Sigmoid colon (tissue), 7 donors: ENCODE measurements at regions of chr5 and their contacts with region 1.

Region 1: DNA sequence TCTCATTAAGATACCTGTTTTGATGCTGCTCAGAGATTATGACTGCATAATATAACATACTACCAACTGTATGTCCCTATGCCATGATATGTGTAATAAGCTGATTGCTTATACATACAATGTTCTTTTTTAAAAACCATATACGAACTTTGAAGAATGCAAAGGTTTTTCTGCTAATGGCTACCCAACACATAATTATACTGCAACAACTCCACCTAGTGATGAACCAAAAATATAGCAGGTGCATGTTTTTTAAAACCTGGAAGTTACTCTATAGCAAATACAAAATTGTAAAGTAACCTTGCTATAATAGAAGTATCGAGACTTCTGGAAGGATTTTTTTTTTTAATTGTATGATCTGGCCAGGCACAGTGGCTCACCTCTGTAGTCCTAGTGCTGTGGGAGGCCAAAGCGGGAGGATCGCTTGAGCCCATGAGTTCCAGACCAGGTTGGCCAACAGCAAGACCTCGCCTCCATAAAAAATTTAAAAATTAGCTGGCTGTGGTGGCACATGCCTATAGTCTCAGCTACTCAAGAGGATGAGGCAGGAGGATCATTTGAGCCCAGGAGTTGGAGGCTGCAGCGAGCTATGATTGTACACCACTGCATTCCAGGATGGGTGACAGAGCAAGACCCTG is 49.1 kb downstream of the HOMER1 start:
- DNase-seq: no peak
- H3K4me3 ChIP-seq: no peak overlapping the region
- H3K27ac ChIP-seq: no peak overlapping the region
- H3K4me1 ChIP-seq: no peaks in the 10 kb centered on the region
- H3K27me3 ChIP-seq: no peaks in the 10 kb centered on the region
- CTCF ChIP-seq: peak; percentile 42 to 54 (median 49)
- EP300 ChIP-seq: no peak
- POLR2A ChIP-seq: no peak

Region 2: GRCh38 chr5:79133657-79134451 is 331.0 kb before region 1 on chr5:
- intact Hi-C with region 1: loop called (anchors 1 kb)
- DNase-seq: peak; percentile 86
- H3K4me3 ChIP-seq: peak overlapping the region; percentile 9 to 42 (median 33)
- H3K27ac ChIP-seq: peak overlapping the region; percentile 68 to 85 (median 83)
- H3K4me1 ChIP-seq: peaks cover 0 to 21% (median 6%) of the 10 kb centered on the region in 4 donors
- H3K27me3 ChIP-seq: no peaks in the 10 kb centered on the region
- CTCF ChIP-seq: peak; percentile 69 to 85 (median 76)
- EP300 ChIP-seq: no peak
- POLR2A ChIP-seq: no peak

Region 3: DNA sequence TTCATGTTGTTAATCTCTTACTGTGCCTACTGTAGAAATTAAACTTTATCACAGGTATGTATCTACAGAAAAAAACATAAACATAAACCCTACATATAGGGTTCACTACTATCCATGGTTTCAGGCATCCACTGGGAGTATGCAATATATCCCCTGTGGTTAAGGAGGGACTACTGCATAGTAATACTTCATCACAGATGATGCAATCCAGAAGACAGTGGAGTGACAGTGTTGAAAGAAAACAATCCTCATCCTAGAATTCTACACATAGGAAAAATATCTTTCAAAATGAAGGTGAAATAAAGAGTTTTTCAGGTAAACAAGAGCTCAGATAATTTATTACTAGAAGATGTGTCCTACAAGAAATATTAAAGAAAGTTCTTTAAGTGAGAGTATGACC is 56.8 kb before region 1 on chr5:
- intact Hi-C with region 1: no loop called
- DNase-seq: no peak
- H3K4me3 ChIP-seq: no peak overlapping the region
- H3K27ac ChIP-seq: no peak overlapping the region
- H3K4me1 ChIP-seq: no peaks in the 10 kb centered on the region
- H3K27me3 ChIP-seq: no peaks in the 10 kb centered on the region
- CTCF ChIP-seq: no peak
- EP300 ChIP-seq: no peak
- POLR2A ChIP-seq: no peak